Heart right ventricle (tissue), 16 donors: ENCODE measurements at regions of chr3 and their contacts with region 1.

Region 1: DNA sequence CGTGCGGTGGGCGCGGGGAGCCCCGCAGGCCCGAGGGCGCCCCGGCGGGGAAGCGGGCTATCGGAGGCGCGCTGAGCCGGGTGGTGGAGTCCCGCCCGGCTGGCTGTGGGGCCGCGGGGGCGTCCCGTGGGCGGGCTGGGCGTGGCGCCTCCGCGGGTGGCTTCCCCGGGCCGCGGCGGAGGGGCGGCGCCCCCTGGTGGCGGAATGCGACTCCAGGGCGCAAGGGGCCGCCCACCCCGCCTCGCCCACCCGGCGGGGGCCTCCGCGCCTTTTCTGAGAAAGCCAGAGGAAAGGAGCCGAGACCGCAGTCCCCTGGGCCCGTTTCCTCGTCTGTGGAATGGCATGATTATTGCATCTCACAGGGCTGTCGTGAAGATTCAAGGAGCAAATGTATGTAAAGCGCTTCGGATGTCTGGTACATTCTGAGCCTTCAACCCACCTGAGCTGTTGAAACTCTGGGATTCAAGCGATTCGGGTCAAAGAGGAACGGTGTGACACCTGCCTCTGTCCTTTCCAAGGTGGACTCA is 31.9 kb upstream of the RAB6B start:
- DNase-seq: peak; percentile 50 to 73
- ATAC-seq: peak; percentile 74 to 91 (median 78)
- H3K4me3 ChIP-seq: peak overlapping the region; percentile 9 to 73 (median 59)
- H3K27ac ChIP-seq: peak overlapping the region in 2 of 10 donors; percentile 12 to 30
- H3K4me1 ChIP-seq: peaks cover 3 to 12% (median 9%) of the 10 kb centered on the region in 9 donors
- H3K27me3 ChIP-seq: peaks cover 0 to 10% (median 0%) of the 10 kb centered on the region in 7 donors
- CTCF ChIP-seq: peak; percentile 65 to 96 (median 79)

Region 2: DNA sequence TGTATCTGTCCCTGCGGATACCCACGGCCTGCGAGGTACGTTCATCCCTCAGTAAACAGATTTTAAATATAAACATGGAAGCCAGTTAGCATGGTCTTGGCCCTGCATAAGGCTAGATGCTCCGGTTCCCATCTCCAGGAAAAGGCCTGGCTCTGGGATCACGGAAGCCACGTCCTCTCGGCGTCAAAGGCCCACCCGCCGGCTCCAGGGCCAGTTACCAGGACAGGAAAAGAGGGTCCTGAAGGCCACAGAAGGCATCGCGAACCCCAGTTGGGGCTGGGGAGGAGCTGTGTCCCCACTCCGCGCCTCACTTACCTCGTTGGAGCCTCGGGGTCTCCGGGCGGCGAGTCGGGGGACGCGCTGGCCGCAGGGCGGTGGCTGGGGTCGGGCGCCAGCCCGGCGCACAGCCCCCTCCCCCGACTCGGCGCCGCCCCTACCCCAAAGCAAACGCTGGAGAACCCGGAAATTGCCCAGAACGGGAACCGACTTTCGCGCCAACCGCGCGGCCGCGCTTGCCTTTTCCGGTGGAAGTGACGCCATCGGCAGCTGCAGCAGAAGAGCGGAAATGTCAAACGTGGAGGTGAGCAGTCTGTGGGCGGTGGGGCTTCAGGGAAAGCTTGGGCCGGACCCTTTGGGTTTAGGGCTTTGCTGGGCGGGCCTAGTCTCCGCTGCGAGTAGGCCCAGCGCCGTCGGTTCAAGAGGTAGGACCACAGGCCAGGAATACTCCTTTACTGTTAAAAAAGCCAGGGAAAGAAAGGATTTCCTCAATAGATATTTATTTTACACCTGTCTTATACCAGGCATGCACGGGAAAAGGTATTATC is 265.9 kb before region 1 on chr3 and contains the start of gene TOPBP1:
- intact Hi-C with region 1: loop called in 4 of 10 experiments (anchors 5 to 10 kb)
- DNase-seq: peak; percentile 81 to 84
- ATAC-seq: peak; percentile 86 to 95 (median 93)
- H3K4me3 ChIP-seq: peak within 1 kb of the TSS; percentile 45 to 91 (median 84)
- H3K27ac ChIP-seq: peak within 1 kb of the TSS; percentile 46 to 92 (median 85)
- H3K4me1 ChIP-seq: peaks cover 0 to 30% (median 25%) of the 10 kb centered on the region in 9 donors
- H3K27me3 ChIP-seq: no peaks in the 10 kb centered on the region
- CTCF ChIP-seq: no peak
- total RNA-seq, gene TOPBP1: 7.3 to 11.8 (median 11.3) TPM

Region 3: DNA sequence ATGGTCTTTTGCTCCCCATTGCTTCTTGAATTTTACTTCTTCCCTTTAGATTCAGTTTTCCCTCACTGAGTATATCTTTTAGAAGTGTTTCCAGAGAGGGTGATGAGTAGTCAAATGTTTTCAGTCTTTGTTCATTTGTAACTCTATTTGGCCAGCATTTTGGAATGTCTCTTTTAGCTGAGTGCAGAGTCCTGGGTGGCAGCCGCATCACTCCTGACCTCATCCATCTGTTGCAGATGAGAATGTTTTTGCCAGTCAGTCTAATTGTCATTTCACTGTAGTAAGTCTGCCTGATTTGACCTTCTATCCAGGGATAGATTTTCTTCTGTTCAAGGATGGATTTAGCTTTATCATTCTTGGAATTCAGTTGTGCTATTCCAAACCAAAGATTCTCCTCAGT is 114.7 kb before region 1 on chr3:
- intact Hi-C with region 1: loop called in 7 of 10 experiments (anchors 2 to 5 kb)
- DNase-seq: no peak
- ATAC-seq: peak in 2 of 8 donors; percentile 37 to 60
- H3K4me3 ChIP-seq: no peak overlapping the region
- H3K27ac ChIP-seq: no peak overlapping the region
- H3K4me1 ChIP-seq: peaks cover 0 to 8% (median 0%) of the 10 kb centered on the region in 9 donors
- H3K27me3 ChIP-seq: no peaks in the 10 kb centered on the region
- CTCF ChIP-seq: no peak

Region 4: DNA sequence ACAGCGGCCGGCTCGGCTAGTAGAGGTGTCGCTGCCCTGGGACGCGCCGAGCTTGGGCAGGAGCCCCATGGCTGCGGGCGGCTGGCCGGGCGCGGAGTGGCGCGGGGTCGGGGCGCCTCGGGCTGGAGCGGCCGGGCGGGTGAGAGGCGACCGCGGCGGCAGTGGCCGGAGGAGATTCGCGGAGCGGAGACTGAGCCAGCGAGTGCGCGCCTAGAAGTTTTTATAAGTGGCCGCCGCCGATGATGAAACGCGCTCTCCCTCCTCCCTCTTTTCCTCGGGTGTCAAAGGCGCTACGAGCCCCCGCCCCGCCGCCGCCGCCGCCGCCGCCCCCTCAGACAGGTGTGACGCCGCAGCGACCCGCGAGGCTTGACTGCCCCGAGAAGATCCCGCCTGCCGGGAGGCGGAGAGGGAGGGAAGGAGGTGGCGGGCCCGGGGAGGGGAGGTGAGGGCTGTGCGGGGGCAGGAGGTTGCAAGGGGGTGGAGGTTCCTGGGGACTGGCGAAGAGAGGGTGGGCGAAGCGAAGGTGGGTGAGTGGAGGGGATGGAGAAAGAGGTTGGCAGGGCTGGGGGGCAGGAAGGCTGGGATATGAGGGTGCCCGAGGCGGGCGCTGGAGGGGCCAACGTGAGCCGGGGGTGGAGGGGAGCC is 102.3 kb after region 1 on chr3 and contains the start of gene SLCO2A1:
- intact Hi-C with region 1: loop called in 1 of 10 experiments (anchors 10 kb)
- DNase-seq: peak; percentile 29 to 32
- ATAC-seq: peak; percentile 47 to 68 (median 55)
- H3K4me3 ChIP-seq: peak within 1 kb of the TSS; percentile 24 to 71 (median 60)
- H3K27ac ChIP-seq: peak within 1 kb of the TSS in 5 of 10 donors; percentile 29 to 60 (median 31)
- H3K4me1 ChIP-seq: peaks cover 0 to 27% (median 6%) of the 10 kb centered on the region in 9 donors
- H3K27me3 ChIP-seq: peaks cover 0 to 40% (median 16%) of the 10 kb centered on the region in 7 donors
- CTCF ChIP-seq: no peak
- total RNA-seq, gene SLCO2A1: 3.6 to 30.4 (median 8.4) TPM

Region 5: GRCh38 chr3:134212906-134213665 is 285.5 kb after region 1 on chr3:
- intact Hi-C with region 1: loop called in 7 of 10 experiments (anchors 2 to 5 kb)
- DNase-seq: peak; percentile 75 to 78
- ATAC-seq: peak; percentile 77 to 93 (median 84)
- H3K4me3 ChIP-seq: no peak overlapping the region
- H3K27ac ChIP-seq: no peak overlapping the region
- H3K4me1 ChIP-seq: peaks cover 0 to 46% (median 14%) of the 10 kb centered on the region in 9 donors
- H3K27me3 ChIP-seq: no peaks in the 10 kb centered on the region
- CTCF ChIP-seq: peak; percentile 88 to 99 (median 98)

Region 6: GRCh38 chr3:134485718-134486576 is 558.3 kb after region 1 on chr3 and contains the starts of genes ANAPC13 and CEP63:
- intact Hi-C with region 1: loop called in 1 of 10 experiments (anchors 10 kb)
- DNase-seq: peak; percentile 88 to 97
- ATAC-seq: peak; percentile 91 to 97 (median 94)
- H3K4me3 ChIP-seq: peak within 1 kb of the TSS; percentile 71 to 94 (median 79)
- H3K27ac ChIP-seq: peak within 1 kb of the TSS; percentile 93 to 99 (median 96)
- H3K4me1 ChIP-seq: peaks cover 11 to 53% (median 40%) of the 10 kb centered on the region in 9 donors
- H3K27me3 ChIP-seq: no peaks in the 10 kb centered on the region
- CTCF ChIP-seq: no peak
- total RNA-seq, gene ANAPC13: 68.2 to 119 (median 84.0) TPM
- total RNA-seq, gene CEP63: 27.6 to 38.8 (median 31.0) TPM